Activated CD4-positive, alpha-beta memory T cell treated with anti-CD3 and anti-CD28 coated beads, Interleukin-2, amount 10 ng/mL, durations not matched to agents 7 days and 5 days (primary cell): ENCODE measurements at regions of chr2 and their contacts with region 1.

Region 1: GRCh38 chr2:113138428-113139322 is 11.3 kb downstream of the IL1RN start:
- DNase-seq: peak; percentile 52
- H3K4me3 Mint-ChIP-seq: peak overlapping the region; percentile 25
- H3K27ac Mint-ChIP-seq: no peak overlapping the region
- H3K4me1 Mint-ChIP-seq: peaks cover 30% of the 10 kb centered on the region
- H3K27me3 Mint-ChIP-seq: no peaks in the 10 kb centered on the region

Region 2: DNA sequence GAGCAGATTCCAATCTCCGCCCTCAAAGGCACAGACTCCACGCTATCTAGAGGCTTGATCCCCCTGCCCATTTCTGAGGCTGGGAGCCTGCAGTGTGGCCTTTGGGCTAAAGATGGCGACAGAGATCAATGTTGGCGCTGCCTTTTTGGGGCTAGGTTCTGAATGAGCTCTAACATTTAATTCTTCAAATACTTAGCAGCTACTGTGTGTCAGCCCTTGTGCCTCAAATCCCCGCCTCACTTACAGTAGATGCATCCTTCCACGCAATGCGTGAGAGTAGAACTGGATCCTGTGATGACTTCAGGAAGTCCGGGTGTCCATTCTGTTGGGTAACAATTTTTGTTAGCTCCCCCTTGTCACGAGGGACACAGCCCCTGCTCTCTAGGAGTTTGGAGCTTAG is 58.5 kb before region 1 on chr2:
- CTCF ChIA-PET with region 1: interaction called, 78 read pairs
- POLR2A ChIA-PET with region 1: no interaction called
- DNase-seq: peak; percentile 60
- H3K4me3 Mint-ChIP-seq: no peak overlapping the region
- H3K27ac Mint-ChIP-seq: no peak overlapping the region
- H3K4me1 Mint-ChIP-seq: peaks cover 6% of the 10 kb centered on the region
- H3K27me3 Mint-ChIP-seq: peaks cover 15% of the 10 kb centered on the region

Region 3: DNA sequence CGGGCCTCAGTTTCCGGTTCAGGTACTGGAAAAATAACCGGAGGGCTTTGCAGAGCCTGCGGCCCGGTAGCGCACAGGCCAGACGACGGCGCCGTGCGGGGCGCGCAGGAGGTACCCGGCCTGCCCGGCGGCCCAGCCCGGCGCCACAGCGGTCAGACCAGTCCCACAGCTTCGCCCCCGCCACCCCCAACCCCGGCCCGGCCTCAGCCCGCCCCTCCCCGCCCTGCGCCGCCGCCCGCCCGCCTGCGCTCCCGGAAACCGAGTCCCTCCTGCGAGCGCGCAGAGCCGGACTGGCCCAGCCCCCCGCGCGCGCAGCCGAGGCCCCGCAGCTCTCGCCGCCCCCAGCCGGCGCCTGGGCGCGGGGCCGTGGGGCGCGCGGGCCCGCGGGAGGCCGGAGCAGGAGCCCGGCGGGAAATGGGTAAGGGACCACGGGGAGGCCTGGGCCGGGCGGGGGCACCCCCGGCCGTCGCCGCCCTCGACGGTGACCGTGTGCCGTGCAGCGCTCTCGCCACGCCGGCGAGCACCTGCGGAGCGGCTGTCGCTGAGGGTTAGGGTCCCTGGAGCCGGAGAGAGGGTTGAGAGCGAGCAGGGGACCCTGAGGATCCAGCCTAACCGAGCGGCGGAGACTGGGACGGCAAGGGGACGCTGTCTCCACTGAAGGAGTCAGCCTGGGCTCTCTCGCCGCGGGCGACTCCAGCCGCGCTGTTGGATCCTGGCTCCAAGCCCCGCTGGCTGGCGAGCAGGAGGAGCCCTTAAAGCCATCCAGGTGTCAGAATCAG is 18.6 kb after region 1 on chr2:
- CTCF ChIA-PET with region 1: interaction called, 46 read pairs
- POLR2A ChIA-PET with region 1: interaction called, 4 read pairs
- DNase-seq: peak; percentile 57
- H3K4me3 Mint-ChIP-seq: peak overlapping the region; percentile 79
- H3K27ac Mint-ChIP-seq: peak overlapping the region; percentile 64
- H3K4me1 Mint-ChIP-seq: peaks cover 18% of the 10 kb centered on the region
- H3K27me3 Mint-ChIP-seq: peaks cover 8% of the 10 kb centered on the region

Region 4: DNA sequence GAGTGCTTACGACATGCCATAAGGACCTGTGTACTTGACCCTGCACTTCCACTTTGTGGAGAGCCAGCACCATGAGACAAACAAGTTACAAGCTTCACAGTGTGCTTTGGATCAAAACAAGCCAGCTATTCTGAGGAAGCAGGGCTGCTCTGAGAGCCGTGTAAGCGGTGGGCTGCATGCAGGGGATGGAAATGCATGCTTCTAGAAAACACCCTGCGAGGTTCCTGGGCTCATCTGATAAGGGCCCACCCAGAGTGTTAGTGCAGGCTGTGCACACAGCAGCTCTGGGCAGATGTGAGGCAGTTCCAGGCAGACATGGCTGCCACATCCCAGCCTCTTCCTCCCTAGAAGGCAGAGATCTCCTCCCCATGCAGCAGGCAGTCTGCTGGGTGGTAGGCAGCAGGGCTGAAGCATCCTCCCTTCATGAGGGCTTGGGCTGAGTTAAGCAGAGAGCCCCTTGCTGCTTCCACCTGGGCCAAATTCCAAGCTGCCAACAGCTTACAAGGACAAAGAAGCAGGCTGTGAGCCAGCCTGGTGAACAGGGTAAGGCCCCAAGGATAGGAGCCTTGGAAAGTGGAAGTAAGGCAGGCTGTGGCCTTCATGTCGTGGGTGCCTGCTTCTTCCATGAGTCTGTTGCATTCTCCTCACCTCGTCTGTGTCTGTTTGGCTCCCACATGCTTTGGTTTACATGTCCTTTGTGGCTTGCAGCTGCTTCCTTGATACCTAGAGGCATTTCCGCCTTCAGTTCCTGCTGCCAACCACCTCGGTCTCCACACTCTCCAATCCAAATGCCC is 42.8 kb after region 1 on chr2:
- CTCF ChIA-PET with region 1: interaction called, 136 read pairs
- POLR2A ChIA-PET with region 1: interaction called, 45 read pairs
- DNase-seq: peak; percentile 45
- H3K4me3 Mint-ChIP-seq: peak overlapping the region; percentile 27
- H3K27ac Mint-ChIP-seq: peak overlapping the region; percentile 71
- H3K4me1 Mint-ChIP-seq: peaks cover 93% of the 10 kb centered on the region
- H3K27me3 Mint-ChIP-seq: no peaks in the 10 kb centered on the region

Region 5: DNA sequence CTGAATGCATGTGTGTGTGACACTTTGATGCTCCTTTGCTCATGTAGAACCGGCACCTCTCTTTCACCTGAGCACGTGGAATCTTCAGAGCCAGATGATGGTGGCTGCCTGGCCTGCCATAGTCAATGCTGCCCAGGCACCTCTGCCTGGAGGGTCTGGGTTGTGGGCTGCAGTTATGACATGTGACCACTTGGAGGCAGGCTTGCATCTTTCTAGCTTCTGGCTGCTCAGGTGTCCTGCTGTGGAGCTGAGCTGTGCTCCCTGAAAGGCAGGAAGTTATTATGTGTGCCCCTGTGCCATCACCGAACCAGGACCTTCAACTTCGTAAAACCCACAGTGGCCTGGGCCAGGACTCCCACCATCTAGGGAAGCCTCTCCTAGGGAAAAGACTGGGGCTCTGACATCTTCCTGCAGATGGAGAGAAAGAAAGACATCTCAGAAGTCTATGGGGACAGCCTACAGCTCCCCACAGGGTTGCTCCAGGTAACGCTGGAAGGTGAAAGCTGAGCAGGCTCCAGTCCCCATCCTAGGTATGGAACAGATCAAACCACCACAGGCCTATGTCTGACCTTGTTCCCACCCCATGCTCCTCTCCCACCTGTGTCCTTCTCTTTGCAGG is 65.3 kb after region 1 on chr2:
- CTCF ChIA-PET with region 1: interaction called, 95 read pairs
- POLR2A ChIA-PET with region 1: interaction called, 34 read pairs
- DNase-seq: peak; percentile 80
- H3K4me3 Mint-ChIP-seq: no peak overlapping the region
- H3K27ac Mint-ChIP-seq: peak overlapping the region; percentile 61
- H3K4me1 Mint-ChIP-seq: peaks cover 11% of the 10 kb centered on the region
- H3K27me3 Mint-ChIP-seq: no peaks in the 10 kb centered on the region

Region 6: GRCh38 chr2:113390124-113390849 is 251.6 kb after region 1 on chr2:
- CTCF ChIA-PET with region 1: interaction called, 10 read pairs
- POLR2A ChIA-PET with region 1: no interaction called
- DNase-seq: peak; percentile 62
- H3K4me3 Mint-ChIP-seq: peak overlapping the region; percentile 53
- H3K27ac Mint-ChIP-seq: peak overlapping the region; percentile 16
- H3K4me1 Mint-ChIP-seq: peaks cover 16% of the 10 kb centered on the region
- H3K27me3 Mint-ChIP-seq: peaks cover 21% of the 10 kb centered on the region